ENCODE measurements at regions of chr2 and their contacts with region 1.

Region 1: GRCh38 chr2:118847497-118848172 is at the start of gene EN1:
- ATAC-seq: peak; percentile 36 to 80 (median 58)
- H3K4me3 ChIP-seq: peak within 1 kb of the TSS; percentile 9 to 32 (median 24)
- H3K27ac ChIP-seq: no peak within 1 kb of the TSS
- H3K4me1 ChIP-seq: peaks cover 1 to 23% of the 10 kb centered on the region in 2 donors
- total RNA-seq, gene EN1: 0.14 to 21.8 (median 1.1) TPM

Region 2: DNA sequence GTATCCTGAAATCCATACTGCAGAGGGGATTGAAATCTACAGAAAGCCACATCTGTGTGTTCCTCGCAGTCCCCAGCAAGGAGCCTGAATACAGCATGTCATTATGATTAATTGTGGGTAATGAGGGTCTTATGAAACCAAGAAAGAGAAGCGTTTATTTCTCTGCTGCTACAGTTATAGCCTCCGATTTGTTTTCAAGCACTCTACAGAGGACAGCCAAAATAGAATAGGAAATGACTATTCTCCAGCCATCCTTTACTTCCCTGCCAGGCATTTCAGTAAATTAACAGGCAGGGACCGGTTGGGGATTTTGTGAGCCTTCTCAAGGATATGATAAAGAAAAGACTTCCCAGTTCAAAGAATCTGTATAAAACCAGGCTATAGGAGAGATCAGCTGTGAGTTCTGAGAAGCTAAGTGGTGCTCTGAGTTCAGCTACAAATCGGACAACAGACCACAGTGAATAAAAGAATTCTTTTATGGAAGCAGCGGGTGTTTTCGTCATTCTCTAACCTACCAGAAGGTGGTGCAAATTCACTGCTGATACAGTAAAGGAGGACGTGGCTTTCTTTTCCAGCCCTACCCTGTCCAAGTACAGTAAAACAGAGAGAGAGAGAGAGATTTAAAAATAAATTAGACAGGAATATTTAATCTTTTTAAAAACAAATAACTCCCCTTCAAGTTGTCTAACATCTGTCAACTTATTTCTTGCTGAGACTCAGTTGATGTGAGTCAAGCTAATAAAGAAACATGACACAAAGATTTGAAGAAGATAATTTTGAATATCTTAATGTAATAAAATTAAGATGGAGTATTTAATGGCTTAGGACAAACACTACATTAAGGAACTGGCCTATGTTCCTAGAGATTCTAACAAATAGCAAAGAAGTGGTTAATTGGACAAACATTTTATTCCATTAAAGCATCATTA is 625.7 kb before region 1 on chr2:
- in situ Hi-C with region 1: loop called in 7 of 9 experiments (anchors 10 to 25 kb)
- ATAC-seq: peak; percentile 77 to 90 (median 84)
- H3K4me3 ChIP-seq: no peak overlapping the region
- H3K27ac ChIP-seq: peak overlapping the region in 1 of 2 donors; percentile 5
- H3K4me1 ChIP-seq: peaks cover 25 to 34% of the 10 kb centered on the region in 2 donors

Region 3: DNA sequence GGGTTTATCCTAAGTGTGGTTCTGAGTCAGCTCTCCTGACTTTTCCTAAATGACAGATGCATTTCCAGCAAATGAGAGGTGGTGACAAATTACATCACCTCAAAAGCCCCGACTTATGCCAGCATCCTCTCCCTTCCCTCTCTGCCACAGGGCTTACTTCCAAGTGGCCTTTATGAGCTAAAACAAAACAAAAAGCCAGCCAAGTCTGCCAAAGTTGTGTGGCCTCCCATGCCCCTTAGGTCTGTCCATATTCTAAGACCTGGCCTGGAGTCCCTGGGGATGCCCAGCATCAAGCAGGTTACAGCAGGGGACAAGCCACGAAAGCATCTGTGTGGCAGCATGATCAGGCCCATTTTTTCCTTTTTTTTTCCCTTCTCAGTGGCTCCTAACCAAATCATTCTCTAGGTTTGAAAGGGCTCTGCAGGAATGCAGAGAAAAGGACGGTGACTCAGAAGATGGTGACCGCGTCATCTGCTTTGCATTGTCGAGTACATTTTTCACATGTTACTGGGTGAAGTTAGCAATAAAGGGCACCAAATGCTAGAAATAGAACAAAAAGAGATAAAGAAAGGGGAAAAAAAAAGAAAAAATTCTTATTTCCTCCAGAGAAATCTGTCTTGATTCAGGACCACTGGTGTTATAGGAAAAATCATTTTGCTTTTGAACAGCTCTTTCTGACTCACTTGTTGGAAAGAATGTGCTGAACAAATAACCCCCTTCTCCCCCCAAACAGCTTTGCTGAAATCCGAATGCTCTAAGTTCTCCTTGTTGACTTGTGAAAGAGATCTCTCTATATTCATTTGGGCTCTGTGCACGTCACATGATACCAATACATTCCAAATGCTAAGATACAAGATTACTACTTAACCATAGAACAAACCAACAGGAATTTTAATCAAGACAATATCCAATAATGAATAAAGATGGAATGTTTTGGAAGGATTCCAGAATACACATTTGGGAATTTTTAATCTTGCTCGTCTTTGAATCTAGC is 178.9 kb before region 1 on chr2:
- in situ Hi-C with region 1: loop called in 2 of 9 experiments (anchors 25 kb)
- ATAC-seq: peak; percentile 67 to 93 (median 90)
- H3K4me3 ChIP-seq: no peak overlapping the region
- H3K27ac ChIP-seq: peak overlapping the region; percentile 49 to 54
- H3K4me1 ChIP-seq: peaks cover 17 to 23% of the 10 kb centered on the region in 2 donors

Region 4: DNA sequence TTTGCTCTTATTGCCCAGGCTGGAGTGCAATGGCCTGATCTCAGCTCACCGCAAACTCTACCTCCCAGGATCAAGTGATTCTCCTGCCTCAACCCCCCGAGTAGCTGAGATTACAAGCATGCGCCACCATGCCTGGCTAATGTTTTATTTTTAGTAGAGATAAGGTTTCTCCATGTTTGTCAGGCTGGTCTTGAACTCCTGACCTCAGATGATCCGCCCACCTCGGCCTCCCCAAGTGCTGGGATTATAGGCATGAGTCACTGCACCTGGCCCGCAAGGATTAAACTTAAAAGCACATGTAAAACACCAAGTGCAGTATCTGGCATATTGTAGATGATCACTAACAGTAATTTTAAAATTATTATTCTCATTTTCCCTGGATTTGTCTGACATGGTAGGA is 238.0 kb after region 1 on chr2:
- in situ Hi-C with region 1: no loop called
- ATAC-seq: no peak
- H3K4me3 ChIP-seq: no peak overlapping the region
- H3K27ac ChIP-seq: no peak overlapping the region
- H3K4me1 ChIP-seq: peaks cover 0 to 7% of the 10 kb centered on the region in 2 donors